ENCODE measurements at regions of chr7 and their contacts with region 1.

Region 1: GRCh38 chr7:131957338-131958020 is 401.1 kb upstream of the PODXL start:
- DNase-seq: no peak
- ATAC-seq: no peak
- H3K4me3 ChIP-seq: no peak overlapping the region
- H3K27ac ChIP-seq: no peak overlapping the region
- H3K4me1 ChIP-seq: no peaks in the 10 kb centered on the region
- H3K27me3 ChIP-seq: no peaks in the 10 kb centered on the region
- CTCF ChIP-seq: no peak
- EP300 ChIP-seq: no peak
- POLR2A ChIP-seq: no peak
- RAD21 ChIP-seq: no peak

Region 2: GRCh38 chr7:131919920-131920709 is 37.4 kb before region 1 on chr7:
- CTCF ChIA-PET with region 1: no interaction called
- POLR2A ChIA-PET with region 1: no interaction called
- RAD21 ChIA-PET with region 1: no interaction called
- SMC1A ChIA-PET with region 1: no interaction called
- in situ Hi-C with region 1: no loop called
- intact Hi-C with region 1: loop called (anchors 2 kb)
- DNase-seq: peak; percentile 32
- ATAC-seq: peak; percentile 69
- H3K4me3 ChIP-seq: no peak overlapping the region
- H3K27ac ChIP-seq: peak overlapping the region; percentile 38; the same call in 1 of the 2 replicates
- H3K4me1 ChIP-seq: 0 out of 2 replicates have a peak, but pooled peaks cover 4% of the 10 kb centered on the region
- H3K27me3 ChIP-seq: no peaks in the 10 kb centered on the region
- CTCF ChIP-seq: no peak
- EP300 ChIP-seq: no peak
- POLR2A ChIP-seq: no peak
- RAD21 ChIP-seq: no peak